ENCODE measurements at regions of chr15 and their contacts with region 1.

Region 1: DNA sequence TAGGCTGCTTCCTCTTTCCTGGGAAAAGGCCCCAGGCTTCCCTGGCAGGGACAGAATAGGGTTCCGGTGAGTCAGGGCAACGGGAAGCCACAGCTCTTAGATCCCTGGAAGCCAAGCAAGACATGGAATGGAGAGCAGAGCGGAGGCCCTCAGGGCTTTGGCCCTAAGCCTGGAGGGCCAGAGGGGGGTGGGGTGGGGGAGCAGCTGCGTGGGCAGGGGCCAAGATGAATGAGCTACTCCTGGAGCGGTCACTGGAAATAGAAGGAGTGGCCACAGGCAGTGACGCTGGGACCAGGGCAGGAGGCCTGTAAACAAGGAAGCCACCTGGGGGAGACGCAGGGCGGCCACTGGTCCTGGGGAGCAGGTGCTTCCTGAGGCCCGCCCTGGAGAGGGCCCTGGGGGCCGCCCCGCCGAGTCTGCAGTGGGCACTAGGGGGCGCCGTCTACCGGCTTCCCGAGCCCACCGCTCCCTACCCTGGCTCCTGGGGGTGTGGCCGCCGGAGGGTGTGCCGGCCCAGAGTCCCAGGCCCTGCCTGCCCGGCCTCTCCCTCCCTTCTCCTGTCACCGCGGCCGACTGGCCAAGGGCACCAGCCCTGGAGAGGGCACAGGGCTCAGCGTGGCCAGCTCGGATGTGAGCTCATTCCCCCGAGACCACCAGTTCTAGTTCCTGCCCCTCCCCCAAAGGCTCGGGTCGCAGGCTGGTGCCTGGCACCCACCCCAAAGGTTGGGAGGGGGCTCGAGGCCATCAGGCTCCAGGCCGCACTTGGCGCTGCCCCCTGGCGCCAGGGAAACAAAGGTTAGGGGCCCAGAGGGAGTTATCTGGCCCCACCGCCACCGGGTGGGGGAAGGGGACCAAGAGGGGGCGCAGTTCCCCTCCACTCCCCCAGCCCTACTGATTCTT is 12.1 kb downstream of the VPS18 start:
- DNase-seq: peak in 9 of 10 donors; percentile 41 to 71 (median 49)
- H3K4me3 ChIP-seq: peak overlapping the region; percentile 22 to 71 (median 49)
- H3K27ac ChIP-seq: peak overlapping the region in 58 of 59 donors; percentile 21 to 92 (median 78)
- H3K27me3 ChIP-seq: no peaks in the 10 kb centered on the region
- CTCF ChIP-seq: peak; percentile 12 to 87 (median 73)

Region 2: DNA sequence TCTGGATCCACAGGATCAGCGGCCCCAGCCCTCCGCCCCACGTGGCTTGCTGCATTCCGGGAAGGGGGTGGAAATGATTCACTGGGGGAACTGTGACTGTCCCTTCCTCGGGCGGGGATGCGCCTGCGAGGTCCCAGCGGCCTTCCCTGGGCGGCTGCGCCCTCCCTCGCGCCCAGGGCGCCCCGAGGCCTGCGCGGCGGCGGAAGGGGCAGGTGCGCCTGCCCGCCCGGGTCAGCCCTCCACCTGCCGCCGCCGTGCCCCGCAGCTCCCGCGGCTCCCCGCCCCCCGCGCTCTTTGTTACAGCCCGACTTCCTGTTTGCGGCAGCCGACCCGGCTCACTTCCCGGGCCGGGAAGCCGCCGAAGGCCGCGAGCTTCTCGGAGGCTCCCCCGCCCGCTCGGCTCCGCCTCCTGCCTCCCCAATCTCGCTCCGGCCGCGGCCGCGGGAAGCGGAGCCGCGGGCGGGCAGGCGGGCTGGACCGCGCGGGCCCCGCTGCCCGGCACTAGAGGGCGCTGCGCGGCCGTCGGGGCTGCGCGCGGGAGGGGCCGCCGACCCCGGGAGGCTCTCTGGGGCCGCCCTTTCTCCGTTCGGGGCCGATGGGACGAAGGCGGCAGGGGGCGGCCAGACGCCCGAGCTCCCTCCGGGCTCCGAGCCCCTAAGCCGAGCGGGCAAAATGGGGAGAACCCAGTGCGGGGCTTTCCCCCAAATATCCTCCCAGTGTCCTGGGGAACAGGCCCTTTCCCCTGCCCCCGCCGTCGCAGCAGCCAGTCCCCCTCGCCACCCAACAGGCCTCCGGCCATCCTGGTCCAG is 35.4 kb after region 1 on chr15:
- intact Hi-C with region 1: loop called (anchors 1 to 5 kb)
- DNase-seq: peak in 9 of 10 donors; percentile 44 to 90 (median 72)
- H3K4me3 ChIP-seq: peak overlapping the region; percentile 37 to 74 (median 61)
- H3K27ac ChIP-seq: peak overlapping the region in 58 of 59 donors; percentile 15 to 91 (median 80)
- H3K27me3 ChIP-seq: no peaks in the 10 kb centered on the region
- CTCF ChIP-seq: peak in 46 of 56 donors; percentile 19 to 84 (median 46)

Region 3: DNA sequence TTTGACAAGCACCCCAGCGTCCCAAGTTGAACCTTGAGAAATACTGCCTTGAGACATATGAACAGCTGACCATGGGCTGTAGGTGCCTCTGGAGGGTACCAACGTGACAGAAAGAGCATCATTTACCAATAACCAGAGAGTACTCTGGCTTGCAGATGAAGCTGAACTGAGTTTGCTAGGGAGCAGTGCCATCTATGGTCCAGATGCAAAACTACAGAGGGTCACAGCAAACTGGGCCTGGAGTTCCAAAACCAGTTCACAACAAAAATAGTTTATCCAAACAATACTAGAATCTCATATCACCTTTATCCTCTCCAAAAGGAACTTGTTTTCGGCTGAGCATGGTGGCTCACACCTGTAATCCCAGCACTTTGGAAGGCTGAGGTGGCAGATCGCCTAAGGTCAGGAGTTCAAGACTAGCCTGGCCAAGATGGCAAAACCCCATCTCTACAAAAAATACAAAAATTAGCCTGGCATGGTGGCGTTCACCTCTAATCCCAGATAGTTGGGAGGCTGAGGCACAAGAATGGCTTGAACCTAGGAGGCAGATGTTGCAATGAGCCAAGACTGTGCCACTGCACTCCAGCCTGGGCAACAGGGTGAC is 116.2 kb after region 1 on chr15:
- intact Hi-C with region 1: loop called (anchors 1 to 2 kb)
- DNase-seq: peak in 6 of 10 donors; percentile 35 to 51 (median 48)
- H3K4me3 ChIP-seq: no peak overlapping the region
- H3K27ac ChIP-seq: no peak overlapping the region
- H3K27me3 ChIP-seq: no peaks in the 10 kb centered on the region
- CTCF ChIP-seq: peak; percentile 23 to 87 (median 76)

Region 4: DNA sequence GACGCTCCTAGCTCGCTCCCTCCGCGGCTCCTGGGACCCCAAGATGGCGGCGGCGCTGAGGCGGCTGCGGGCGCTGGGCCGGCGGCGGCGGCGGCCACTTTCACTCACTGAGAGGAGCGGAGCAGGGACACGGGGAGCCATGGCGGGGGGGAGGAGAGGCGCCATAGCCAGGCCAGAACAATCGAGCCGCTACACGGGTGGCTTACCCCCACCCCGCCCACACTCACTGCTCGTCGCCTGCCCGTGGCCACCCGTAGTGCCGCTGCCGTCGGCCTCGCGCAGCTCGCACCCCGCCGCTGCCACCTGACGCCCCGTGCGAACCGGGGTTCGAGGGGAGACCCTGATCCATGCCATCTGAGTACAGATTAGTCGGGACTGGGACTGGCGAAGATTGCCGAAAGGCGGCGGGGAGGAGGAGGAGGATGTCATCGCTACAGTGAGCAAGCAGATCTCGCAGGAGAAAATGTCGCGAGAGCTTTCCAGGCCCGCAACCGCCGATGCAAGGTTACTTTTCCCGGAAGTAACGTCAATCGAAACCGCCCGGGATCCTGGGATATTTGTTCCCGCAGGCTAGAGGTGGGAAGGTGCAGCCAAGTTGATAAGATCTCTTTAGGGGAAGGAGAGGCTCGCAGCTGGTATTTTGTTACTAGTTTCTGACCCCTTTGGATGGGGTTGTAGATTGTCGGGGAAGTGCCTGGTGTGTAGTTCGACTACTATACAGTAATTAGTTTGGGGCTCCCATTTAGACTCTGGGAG is 210.0 kb after region 1 on chr15 and contains the start of gene INO80:
- intact Hi-C with region 1: loop called in 1 of 2 experiments (anchors 10 kb)
- DNase-seq: peak; percentile 87 to 99 (median 96)
- H3K4me3 ChIP-seq: peak within 1 kb of the TSS; percentile 68 to 99 (median 92)
- H3K27ac ChIP-seq: peak within 1 kb of the TSS; percentile 89 to 100 (median 99)
- H3K27me3 ChIP-seq: no peaks in the 10 kb centered on the region
- CTCF ChIP-seq: peak in 27 of 56 donors; percentile 7 to 45 (median 26)
- total RNA-seq, gene INO80: 15.8 to 35.4 (median 24.2) TPM

Region 5: DNA sequence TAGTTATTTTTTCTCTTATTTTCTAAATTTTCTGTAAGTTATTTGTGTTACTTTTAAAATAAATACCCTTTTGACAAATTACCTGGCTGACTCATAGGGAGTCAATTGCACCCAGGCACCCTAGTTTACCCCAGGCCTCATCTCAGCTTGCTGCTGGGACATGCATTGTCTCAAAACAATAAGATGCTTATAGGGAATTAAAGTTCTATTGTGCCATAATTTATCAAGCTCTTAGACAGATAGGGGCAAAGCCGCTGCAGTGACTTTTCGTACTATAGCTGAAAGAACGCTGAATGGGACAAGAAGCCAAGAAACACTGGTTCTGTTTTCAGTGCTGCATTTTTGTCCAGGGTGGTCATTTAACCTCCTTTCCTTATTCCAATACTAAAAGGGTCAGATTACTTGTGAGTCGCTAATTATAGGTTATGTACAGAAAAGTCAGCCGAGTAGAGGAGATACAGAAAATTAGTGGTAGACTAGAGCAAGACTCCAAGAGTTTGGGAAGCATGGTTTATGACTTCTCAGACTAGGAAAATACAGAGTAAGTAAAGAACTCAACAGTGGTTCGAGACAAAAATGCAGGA is 274.0 kb after region 1 on chr15:
- intact Hi-C with region 1: loop called (anchors 2 to 5 kb)
- DNase-seq: no peak
- H3K4me3 ChIP-seq: no peak overlapping the region
- H3K27ac ChIP-seq: no peak overlapping the region
- H3K27me3 ChIP-seq: peaks cover 0 to 6% (median 0%) of the 10 kb centered on the region in 45 donors
- CTCF ChIP-seq: no peak

Region 6: GRCh38 chr15:41331833-41332787 is 425.8 kb after region 1 on chr15 and contains the start of gene OIP5:
- intact Hi-C with region 1: loop called in 1 of 2 experiments (anchors 5 kb)
- DNase-seq: peak; percentile 90 to 98 (median 96)
- H3K4me3 ChIP-seq: peak within 1 kb of the TSS; percentile 65 to 100 (median 89)
- H3K27ac ChIP-seq: peak within 1 kb of the TSS in 33 of 59 donors; percentile 3 to 75 (median 33)
- H3K27me3 ChIP-seq: no peaks in the 10 kb centered on the region
- CTCF ChIP-seq: peak in 55 of 56 donors; percentile 21 to 75 (median 54)
- total RNA-seq, gene OIP5: 0.32 to 2.6 (median 0.63) TPM in 63 of 120 experiments, not detected in the others